Endothelial cell of umbilical vein (primary cell): ENCODE measurements at regions of chr11 and their contacts with region 1.

Region 1: DNA sequence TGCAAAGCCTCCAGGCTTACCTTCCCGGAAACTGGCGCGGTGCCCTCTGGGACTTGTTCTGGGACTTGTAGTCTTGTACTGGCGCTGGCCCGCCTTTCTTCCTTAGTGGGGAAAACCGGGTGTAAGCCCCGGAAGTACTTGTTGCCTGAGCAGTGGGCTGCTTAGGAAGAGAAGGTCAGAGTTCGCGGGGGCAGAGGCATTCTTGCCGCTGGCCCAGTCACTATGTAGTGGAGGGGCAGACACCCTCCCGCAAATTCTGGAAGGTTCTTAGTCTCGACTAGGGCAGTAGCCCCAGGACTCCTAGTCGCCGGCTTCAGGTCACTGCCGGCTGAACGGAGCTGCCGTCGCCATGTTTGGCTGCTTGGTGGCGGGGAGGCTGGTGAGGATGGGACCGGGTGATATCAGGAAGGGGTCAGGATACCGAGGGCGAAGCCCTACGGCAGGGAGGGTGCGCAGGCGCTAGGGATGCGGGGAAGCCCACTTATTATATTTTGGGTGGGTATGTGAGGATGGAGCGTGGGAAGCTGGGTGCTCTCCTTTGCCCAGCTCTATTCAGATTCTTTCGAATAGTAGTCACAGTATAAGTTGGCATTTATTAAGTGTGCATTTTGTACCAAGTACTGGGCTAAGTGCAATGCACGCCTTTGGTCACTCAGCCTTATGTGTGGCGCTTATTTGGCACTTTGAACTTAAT is at the start of gene HIKESHI:
- DNase-seq: peak; percentile 97
- H3K4me3 ChIP-seq: peak within 1 kb of the TSS; percentile 12 to 89 (median 75)
- H3K27ac ChIP-seq: peak within 1 kb of the TSS; percentile 58
- H3K4me1 ChIP-seq: peaks cover 6% of the 10 kb centered on the region
- H3K27me3 ChIP-seq: peaks cover 0 to 3% of the 10 kb centered on the region in 2 experiments
- CTCF ChIP-seq: no peak
- POLR2A ChIP-seq: peak; percentile 80
- total RNA-seq, gene HIKESHI: 38.7 and 40.2 TPM in 2 replicates

Region 2: GRCh38 chr11:86244522-86245368 is 57.5 kb before region 1 on chr11 and contains the start of gene EED:
- CTCF ChIA-PET with region 1: no interaction called
- POLR2A ChIA-PET with region 1: no interaction called
- dilution Hi-C with region 1: no loop called
- intact Hi-C with region 1: loop called (anchors 1 kb)
- DNase-seq: peak; percentile 95
- H3K4me3 ChIP-seq: peak within 1 kb of the TSS; percentile 69 to 85 (median 84)
- H3K27ac ChIP-seq: peak within 1 kb of the TSS; percentile 85
- H3K4me1 ChIP-seq: peaks cover 16% of the 10 kb centered on the region
- H3K27me3 ChIP-seq: peaks cover 20% of the 10 kb centered on the region in 2 experiments
- CTCF ChIP-seq: no peak
- POLR2A ChIP-seq: peak; percentile 88
- total RNA-seq, gene EED: 21.8 and 22.7 TPM in 2 replicates

Region 3: DNA sequence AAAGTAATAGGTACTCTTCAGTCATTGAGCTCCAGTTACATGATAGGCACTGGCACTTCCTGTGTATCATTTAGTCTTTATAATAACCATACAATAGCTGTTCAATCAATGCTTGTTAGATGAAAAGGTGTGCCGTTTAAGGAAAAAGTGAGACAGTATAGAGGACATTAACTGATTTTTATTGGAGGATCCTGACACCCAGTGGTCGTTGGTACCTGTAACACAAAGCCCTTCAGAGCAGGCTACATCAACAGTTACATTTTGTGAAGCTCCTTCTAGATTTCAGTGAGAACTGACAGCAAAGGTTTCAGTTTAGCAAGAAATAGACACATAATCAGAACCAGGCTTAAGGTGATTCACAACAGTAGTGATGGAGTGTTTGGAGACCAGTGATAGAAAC is 116.7 kb after region 1 on chr11:
- CTCF ChIA-PET with region 1: interaction called, 4 read pairs
- POLR2A ChIA-PET with region 1: no interaction called
- dilution Hi-C with region 1: no loop called
- intact Hi-C with region 1: loop called (anchors 5 kb)
- DNase-seq: peak; percentile 11
- H3K4me3 ChIP-seq: no peak overlapping the region
- H3K27ac ChIP-seq: no peak overlapping the region
- H3K4me1 ChIP-seq: no peaks in the 10 kb centered on the region
- H3K27me3 ChIP-seq: no peaks in the 10 kb centered on the region
- CTCF ChIP-seq: peak in 1 of 2 donors; percentile 4
- POLR2A ChIP-seq: no peak